ENCODE measurements at regions of chr11 and their contacts with region 1.

Region 1: DNA sequence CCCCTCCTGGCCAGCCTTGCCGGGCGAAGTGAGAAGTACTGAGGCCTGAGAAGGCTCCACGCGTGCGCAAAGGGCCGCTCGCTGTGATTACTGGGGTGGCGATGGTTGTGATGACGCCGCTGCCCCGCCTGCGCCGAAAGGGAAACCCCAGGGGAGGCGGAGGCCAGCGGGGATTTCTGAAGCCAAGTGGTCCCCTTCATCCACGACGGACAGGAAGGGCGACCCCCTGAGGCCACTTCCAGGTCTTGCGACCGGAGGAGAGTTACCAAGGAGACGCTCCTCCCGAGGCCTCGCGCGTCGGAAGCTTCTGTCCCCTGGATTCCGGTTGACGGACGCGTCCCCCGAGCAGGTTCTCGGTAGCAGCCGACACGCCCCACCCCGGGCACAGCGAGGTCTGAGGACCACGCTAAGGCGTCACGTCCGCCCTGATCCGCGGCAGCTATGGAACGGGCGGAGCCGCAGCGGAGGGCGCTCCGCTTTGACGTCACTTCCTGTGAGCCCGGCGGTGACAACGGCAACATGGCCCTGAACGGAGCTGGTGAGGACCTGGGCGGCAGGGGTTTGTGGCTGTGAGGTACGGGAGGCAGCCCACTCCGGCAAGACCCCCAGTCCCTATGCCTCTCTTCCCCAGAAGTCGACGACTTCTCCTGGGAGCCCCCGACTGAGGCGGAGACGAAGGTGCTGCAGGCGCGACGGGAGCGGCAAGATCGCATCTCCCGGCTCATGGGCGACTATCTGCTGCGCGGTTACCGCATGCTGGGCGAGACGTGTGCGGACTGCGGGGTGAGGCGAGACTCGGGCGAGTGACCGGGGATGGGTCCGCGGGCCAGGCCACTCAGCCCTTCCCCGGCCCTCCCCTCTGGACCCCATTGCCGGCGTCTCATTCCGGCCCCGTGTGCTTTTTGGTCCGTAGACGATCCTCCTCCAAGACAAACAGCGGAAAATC is at the start of gene ZNRD2:
- DNase-seq: peak; percentile 98 to 99
- H3K4me3 ChIP-seq: peak within 1 kb of the TSS; percentile 73
- H3K27ac ChIP-seq: peak within 1 kb of the TSS; percentile 68
- H3K4me1 ChIP-seq: peaks cover 54% of the 10 kb centered on the region
- H3K27me3 ChIP-seq: no peaks in the 10 kb centered on the region
- CTCF ChIP-seq: peak; percentile 57
- total RNA-seq, gene ZNRD2: 51.4 and 53.5 TPM in 2 replicates

Region 2: GRCh38 chr11:65366340-65366773 is 203.9 kb before region 1 on chr11:
- CTCF ChIA-PET with region 1: no interaction called
- POLR2A ChIA-PET with region 1: interaction called, 3 read pairs
- intact Hi-C with region 1: loop called (anchors 1 kb)
- DNase-seq: peak; percentile 55 to 71
- H3K4me3 ChIP-seq: no peak overlapping the region
- H3K27ac ChIP-seq: no peak overlapping the region
- H3K4me1 ChIP-seq: peaks cover 9% of the 10 kb centered on the region
- H3K27me3 ChIP-seq: no peaks in the 10 kb centered on the region
- CTCF ChIP-seq: peak; percentile 92

Region 3: DNA sequence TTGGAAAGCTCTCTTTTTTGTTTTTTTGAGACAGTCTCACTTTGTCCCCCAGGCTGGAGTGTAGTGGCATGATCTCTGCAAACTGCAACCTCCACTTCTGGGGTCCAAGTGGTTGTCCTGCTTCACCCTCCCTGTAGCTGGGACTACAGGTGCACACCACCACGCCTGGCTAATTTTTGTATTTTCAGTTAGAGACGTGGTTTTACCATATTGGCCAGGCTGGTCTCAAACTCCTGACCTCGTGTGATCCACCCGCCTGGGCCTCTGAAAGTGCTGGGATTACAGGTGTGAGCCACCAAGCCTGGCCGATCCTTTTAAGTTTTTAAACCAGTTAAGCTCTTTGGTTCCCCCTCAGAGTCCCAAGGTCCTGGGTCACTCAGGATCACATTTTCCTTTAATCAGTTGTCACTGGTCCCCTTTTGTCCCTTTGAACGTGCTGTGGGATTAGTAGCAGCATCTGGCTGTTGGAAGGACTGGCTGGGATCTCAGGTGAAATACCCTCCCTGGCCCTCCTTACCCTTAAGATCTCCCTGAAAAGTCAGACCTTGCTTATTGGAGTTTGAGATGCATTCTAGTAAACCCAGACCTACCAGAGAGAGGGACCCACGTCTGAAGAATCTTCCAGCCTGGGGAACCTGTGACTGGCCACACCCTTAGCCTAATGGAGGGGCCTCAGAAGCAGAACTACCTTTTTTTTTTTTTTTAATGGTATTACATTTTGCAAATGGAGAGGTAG is 63.3 kb before region 1 on chr11:
- CTCF ChIA-PET with region 1: interaction called, 22 read pairs
- POLR2A ChIA-PET with region 1: interaction called, 16 read pairs
- intact Hi-C with region 1: loop called (anchors 2 kb)
- DNase-seq: no peak
- H3K4me3 ChIP-seq: peak overlapping the region; percentile 23; the same call in 1 of the 2 replicates
- H3K27ac ChIP-seq: peak overlapping the region; percentile 97
- H3K4me1 ChIP-seq: peaks cover 56% of the 10 kb centered on the region
- H3K27me3 ChIP-seq: no peaks in the 10 kb centered on the region
- CTCF ChIP-seq: no peak

Region 4: DNA sequence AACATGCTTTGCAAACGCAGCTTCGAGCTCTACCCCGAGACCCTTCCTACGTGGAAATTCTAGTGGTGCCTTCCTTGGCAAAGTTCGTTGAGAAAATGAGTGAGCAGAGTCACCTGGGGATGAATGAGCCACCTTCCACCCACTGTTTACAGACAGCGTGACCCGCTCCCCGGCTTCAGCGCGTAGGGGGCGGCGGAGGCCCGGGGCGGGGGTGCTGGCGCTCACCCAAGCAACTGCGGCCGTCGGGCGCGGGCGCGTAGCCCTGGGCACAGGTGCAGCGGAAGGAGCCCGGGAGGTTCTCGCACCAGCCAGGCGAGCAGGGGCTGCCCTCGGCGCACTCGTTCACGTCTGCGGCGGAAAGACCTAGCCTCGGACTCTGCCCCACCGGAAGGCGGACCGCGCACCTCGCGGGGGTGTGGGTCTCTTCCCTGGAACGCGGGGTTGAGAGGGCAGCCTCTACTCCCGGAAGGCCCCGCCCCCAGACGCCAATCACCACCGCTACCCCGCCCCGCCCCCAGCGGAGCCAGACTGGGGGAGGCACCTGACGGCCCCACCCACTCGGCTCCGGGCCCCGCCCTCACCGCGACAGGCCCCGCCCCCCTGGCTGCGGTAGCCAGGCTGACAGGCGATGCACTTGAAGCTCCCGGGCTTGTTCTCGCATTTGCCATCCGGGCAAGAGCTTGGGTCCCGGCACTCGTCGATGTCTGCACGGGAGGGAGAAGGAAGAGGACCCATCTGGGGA is 23.9 kb before region 1 on chr11:
- CTCF ChIA-PET with region 1: interaction called, 25 read pairs
- POLR2A ChIA-PET with region 1: interaction called, 19 read pairs
- intact Hi-C with region 1: loop called (anchors 1 kb)
- DNase-seq: no peak
- H3K4me3 ChIP-seq: no peak overlapping the region
- H3K27ac ChIP-seq: no peak overlapping the region
- H3K4me1 ChIP-seq: peaks cover 9% of the 10 kb centered on the region
- H3K27me3 ChIP-seq: no peaks in the 10 kb centered on the region
- CTCF ChIP-seq: no peak

Region 5: DNA sequence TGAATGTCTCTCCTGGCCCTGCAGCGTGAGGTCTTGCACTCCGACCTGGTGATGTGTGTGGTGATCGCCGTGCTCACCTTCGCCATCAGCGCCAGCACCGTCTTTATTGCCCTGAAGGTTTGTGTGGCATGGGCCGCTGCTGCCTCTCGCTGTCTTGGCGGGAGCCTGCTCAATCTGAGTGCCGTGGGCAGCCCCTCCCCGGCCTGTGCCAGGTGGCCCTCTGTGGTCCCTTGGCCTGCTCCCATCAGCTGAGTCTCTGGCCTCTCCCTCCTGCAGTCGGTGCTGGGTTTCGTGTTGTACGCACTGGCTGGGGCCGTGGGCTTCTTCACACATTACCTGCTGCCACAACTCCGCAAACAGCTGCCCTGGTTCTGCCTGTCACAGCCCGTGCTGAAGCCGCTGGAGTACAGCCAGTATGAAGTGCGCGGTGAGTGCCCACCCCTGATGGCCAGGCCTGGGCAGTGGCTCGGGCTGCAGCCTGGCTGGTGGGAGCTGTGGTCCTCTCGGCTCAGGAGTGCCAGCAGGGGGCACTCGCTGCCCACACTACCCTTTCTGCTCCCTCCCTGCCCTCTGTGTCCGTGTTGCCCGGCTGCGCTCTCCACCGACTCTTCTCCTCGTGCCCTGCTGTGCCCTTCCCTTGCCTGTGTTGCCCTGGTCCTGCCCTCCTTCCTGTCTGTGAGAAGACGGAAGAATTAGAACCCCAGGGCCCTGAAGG is 55.5 kb after region 1 on chr11:
- CTCF ChIA-PET with region 1: interaction called, 13 read pairs
- POLR2A ChIA-PET with region 1: no interaction called
- intact Hi-C with region 1: no loop called
- DNase-seq: peak in 1 of 2 experiments; percentile 26
- H3K4me3 ChIP-seq: no peak overlapping the region
- H3K27ac ChIP-seq: no peak overlapping the region
- H3K4me1 ChIP-seq: no peaks in the 10 kb centered on the region
- H3K27me3 ChIP-seq: no peaks in the 10 kb centered on the region
- CTCF ChIP-seq: peak; percentile 55

Region 6: GRCh38 chr11:66011239-66011784 is 441.1 kb after region 1 on chr11:
- CTCF ChIA-PET with region 1: no interaction called
- POLR2A ChIA-PET with region 1: no interaction called
- intact Hi-C with region 1: loop called (anchors 5 kb)
- DNase-seq: peak; percentile 94 to 100
- H3K4me3 ChIP-seq: peak overlapping the region; percentile 52
- H3K27ac ChIP-seq: peak overlapping the region; percentile 66
- H3K4me1 ChIP-seq: peaks cover 64% of the 10 kb centered on the region
- H3K27me3 ChIP-seq: no peaks in the 10 kb centered on the region
- CTCF ChIP-seq: no peak